ENCODE measurements at regions of chr2 and their contacts with region 1.

Region 1: GRCh38 chr2:224927646-224928173 is 114.6 kb downstream of the DOCK10 start:
- DNase-seq: no peak
- H3K4me3 ChIP-seq: no peak overlapping the region
- H3K27ac ChIP-seq: no peak overlapping the region
- H3K4me1 ChIP-seq: peaks cover 34% of the 10 kb centered on the region
- CTCF ChIP-seq: no peak

Region 2: DNA sequence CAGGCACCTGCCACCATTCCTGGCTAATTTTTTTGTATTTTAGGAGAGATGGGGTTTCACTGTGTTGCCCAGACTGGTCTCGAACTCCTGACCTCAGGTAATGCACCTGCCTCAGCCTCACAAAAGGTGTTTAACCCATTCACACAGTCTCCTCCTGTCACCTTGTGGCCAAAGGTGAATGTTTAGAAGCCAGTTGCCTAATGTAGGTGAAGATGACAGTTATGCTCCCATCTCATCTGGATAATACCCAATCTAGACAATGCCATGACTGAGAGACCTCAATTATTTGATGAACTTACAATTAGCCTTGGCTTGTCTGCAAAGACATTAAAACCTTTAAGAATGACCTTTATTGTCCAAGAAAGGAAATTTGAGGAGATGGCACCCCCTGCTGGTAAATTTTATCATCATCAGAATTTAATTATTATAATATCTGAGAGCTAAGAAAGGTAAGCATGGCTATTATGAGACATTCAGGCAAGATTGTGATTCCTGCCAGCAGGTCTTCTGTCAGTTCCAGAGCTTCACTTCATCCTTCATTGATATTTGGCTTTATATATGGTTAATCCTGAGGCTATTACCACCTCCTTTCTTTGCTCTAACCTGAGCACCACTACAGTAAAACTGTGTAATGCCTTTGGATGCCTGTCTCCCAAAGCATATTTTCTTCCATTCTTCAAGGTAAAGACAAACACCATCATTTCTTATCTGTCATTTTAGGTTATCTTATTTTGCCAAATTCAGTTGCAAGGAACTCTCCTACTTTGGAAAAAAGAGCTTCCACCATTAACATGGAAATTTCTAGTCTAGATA is 643.4 kb before region 1 on chr2:
- CTCF ChIA-PET with region 1: no interaction called
- POLR2A ChIA-PET with region 1: no interaction called
- intact Hi-C with region 1: no loop called
- DNase-seq: peak; percentile 47
- H3K4me3 ChIP-seq: no peak overlapping the region
- H3K27ac ChIP-seq: no peak overlapping the region
- H3K4me1 ChIP-seq: no peaks in the 10 kb centered on the region
- CTCF ChIP-seq: peak; percentile 87

Region 3: DNA sequence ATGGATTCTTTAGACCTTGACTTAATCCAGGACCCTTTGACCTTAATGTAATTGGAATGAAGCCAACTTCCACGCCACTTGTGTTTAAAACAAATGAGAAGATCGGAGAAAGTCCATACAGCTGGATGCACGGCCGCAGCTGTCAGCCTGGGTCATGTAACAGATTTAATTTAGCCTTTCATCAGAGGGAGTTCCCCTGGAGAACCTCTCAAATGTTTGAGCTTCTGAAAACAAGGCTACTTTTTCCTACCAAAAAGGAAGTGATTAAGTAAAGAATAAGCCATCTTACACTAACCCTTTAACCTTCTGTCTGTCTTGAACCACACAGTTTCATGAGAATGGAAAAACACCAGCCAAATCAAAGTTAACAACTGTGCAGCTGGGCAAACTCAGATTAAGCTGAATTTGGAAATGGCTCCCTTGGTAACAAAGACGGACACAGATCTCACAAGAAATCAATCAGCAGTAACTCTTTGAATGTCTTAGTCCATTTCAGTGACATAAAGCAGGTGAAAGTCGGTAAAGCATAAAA is 11.0 kb after region 1 on chr2:
- CTCF ChIA-PET with region 1: no interaction called
- POLR2A ChIA-PET with region 1: interaction called, 15 read pairs
- intact Hi-C with region 1: no loop called
- DNase-seq: peak; percentile 64
- H3K4me3 ChIP-seq: peak overlapping the region; percentile 18
- H3K27ac ChIP-seq: peak overlapping the region; percentile 38
- H3K4me1 ChIP-seq: peaks cover 47% of the 10 kb centered on the region
- CTCF ChIP-seq: no peak

Measured in OCI-LY7 (cell line).